ENCODE measurements at regions of chr20 and their contacts with region 1.

Region 1: GRCh38 chr20:62937366-62938104 is 412 bp upstream of the GID8 start:
- DNase-seq: peak; percentile 95 to 98
- H3K4me3 ChIP-seq: peak overlapping the region; percentile 76 to 87
- H3K27ac ChIP-seq: peak overlapping the region; percentile 77 to 91
- H3K4me1 ChIP-seq: peaks cover 0 to 67% (median 50%) of the 10 kb centered on the region in 4 donors
- H3K27me3 ChIP-seq: no peaks in the 10 kb centered on the region
- CTCF ChIP-seq: no peak

Region 2: DNA sequence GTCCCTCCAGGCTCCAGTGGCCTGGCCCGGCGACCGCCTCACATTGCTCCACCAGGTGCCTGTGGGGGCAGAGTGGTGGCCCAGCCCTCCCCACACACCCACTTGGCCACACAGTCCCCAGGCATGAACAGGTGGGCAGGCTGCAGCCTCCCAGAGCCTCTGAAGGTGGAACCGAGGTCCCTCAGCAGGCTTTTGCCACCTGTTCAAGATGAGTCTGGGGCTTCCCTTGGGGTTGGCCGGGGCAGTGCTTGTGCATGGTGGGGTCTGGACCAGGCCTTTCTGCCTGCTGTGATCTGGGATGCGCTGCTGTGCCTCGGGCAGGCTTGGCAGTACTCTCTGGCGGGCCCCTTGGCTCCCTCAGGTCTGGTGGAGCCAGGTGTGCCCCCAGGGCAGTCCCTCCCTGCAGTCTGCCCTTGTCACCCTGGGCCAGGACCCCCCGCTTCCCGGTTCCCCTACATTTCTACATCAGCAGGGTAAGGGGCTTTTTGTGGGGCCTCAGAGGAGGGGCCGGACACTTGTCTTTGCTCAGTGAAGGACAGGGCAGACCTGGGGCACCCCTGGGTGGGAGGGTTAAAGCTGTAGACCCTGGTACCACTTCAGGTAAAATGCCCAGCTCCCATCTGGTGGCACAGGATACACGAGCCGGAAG is 123.4 kb before region 1 on chr20:
- intact Hi-C with region 1: loop called (anchors 5 kb)
- DNase-seq: no peak
- H3K4me3 ChIP-seq: no peak overlapping the region
- H3K27ac ChIP-seq: no peak overlapping the region
- H3K4me1 ChIP-seq: peaks cover 0 to 47% (median 32%) of the 10 kb centered on the region in 4 donors
- H3K27me3 ChIP-seq: peaks cover 3 to 57% of the 10 kb centered on the region in 2 donors
- CTCF ChIP-seq: no peak